WTC11 (cell line): ENCODE measurements at regions of chr3 and their contacts with region 1.

Region 1: DNA sequence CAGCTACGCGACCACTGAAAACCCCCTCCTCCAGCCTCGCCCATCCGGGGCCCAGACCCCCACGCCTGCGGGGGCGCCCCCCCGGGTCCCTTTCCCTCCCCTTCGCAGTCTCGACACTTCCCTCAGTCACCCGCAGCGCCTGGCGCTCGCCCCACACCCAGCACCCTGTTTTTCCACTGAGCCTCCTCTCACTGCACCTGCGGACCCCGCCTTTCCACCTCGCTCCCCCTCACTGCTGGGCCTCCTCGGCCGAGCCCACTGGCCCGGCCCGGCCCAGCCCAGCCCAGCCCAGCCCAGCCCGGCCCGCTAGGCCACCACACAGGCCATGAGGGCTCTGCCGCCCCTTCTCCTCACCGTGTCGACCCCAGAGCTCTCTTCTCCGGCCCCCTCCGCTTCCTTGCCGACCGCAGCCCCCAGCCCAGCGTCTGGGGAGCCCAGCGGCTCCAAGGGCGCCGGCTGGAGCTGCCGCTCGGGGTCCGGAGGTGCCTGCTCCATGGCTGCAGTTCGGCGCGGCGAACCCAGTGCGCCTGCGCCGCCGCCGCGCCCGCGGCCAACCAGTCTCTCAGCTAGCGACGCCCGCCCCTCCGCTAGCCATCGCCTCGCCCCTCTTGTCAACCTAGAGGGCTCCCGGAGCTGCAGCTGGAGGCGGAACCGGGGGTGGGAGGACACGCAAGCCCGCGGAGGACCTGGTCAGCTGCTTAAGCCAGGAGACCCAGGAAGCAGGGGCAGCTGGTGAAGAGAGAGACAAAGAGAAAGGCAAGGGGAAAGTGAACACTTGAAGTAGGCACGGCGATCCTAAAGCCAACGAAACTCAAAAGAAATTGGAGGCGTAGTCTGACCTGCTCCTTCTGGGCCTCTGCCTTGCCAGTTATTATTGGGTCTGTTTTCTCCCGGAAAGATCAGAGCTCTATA is at the start of gene SNX4:
- DNase-seq: peak; percentile 91
- ATAC-seq: peak; percentile 97
- H3K4me3 Mint-ChIP-seq: peak within 1 kb of the TSS; percentile 89
- H3K27ac Mint-ChIP-seq: peak within 1 kb of the TSS; percentile 89
- H3K4me1 Mint-ChIP-seq: peaks cover 10% of the 10 kb centered on the region
- H3K27me3 Mint-ChIP-seq: no peaks in the 10 kb centered on the region
- CTCF ChIP-seq: no peak
- total RNA-seq, gene SNX4: 23.2 to 26.0 TPM (median 24.8 TPM) in 3 replicates

Region 2: DNA sequence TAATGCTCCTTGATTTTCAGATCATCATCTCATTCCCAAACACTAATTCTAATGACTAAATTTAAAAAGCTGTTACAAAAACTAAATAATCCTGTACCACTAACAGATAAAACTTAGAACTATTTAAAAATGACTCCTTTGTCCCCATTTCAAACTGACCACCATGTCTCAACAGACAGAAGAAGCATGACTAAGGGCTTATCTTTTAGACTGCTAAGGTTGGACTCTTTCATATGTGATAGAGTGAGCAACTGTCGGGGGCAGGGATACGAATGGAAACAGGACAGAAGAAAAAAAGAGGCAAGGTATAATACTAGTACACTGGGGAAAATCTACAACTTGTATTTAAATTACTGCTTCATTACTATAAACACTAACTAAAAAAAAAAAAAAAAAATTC is 23.2 kb before region 1 on chr3:
- CTCF ChIA-PET with region 1: interaction called, 5 read pairs
- POLR2A ChIA-PET with region 1: interaction called, 11 read pairs
- DNase-seq: no peak
- ATAC-seq: no peak
- H3K4me3 Mint-ChIP-seq: no peak overlapping the region
- H3K27ac Mint-ChIP-seq: no peak overlapping the region
- H3K4me1 Mint-ChIP-seq: no peaks in the 10 kb centered on the region
- H3K27me3 Mint-ChIP-seq: no peaks in the 10 kb centered on the region
- CTCF ChIP-seq: no peak